ENCODE measurements at regions of chr12 and their contacts with region 1.

Region 1: GRCh38 chr12:115752913-115753726 is 524.4 kb downstream of the MED13L start:
- DNase-seq: peak; percentile 66
- H3K4me3 Mint-ChIP-seq: no peak overlapping the region
- H3K27ac Mint-ChIP-seq: no peak overlapping the region
- H3K4me1 Mint-ChIP-seq: no peaks in the 10 kb centered on the region
- H3K27me3 Mint-ChIP-seq: peaks cover 52% of the 10 kb centered on the region
- CTCF ChIP-seq: peak; percentile 64

Region 2: GRCh38 chr12:114662512-114663177 is 1090.5 kb before region 1 on chr12:
- CTCF ChIA-PET with region 1: interaction called, 16 read pairs
- POLR2A ChIA-PET with region 1: interaction called, 4 read pairs
- intact Hi-C with region 1: loop called (anchors 1 kb)
- DNase-seq: peak; percentile 86
- H3K4me3 Mint-ChIP-seq: no peak overlapping the region
- H3K27ac Mint-ChIP-seq: no peak overlapping the region
- H3K4me1 Mint-ChIP-seq: peaks cover 6% of the 10 kb centered on the region
- H3K27me3 Mint-ChIP-seq: no peaks in the 10 kb centered on the region
- CTCF ChIP-seq: peak; percentile 92

Region 3: DNA sequence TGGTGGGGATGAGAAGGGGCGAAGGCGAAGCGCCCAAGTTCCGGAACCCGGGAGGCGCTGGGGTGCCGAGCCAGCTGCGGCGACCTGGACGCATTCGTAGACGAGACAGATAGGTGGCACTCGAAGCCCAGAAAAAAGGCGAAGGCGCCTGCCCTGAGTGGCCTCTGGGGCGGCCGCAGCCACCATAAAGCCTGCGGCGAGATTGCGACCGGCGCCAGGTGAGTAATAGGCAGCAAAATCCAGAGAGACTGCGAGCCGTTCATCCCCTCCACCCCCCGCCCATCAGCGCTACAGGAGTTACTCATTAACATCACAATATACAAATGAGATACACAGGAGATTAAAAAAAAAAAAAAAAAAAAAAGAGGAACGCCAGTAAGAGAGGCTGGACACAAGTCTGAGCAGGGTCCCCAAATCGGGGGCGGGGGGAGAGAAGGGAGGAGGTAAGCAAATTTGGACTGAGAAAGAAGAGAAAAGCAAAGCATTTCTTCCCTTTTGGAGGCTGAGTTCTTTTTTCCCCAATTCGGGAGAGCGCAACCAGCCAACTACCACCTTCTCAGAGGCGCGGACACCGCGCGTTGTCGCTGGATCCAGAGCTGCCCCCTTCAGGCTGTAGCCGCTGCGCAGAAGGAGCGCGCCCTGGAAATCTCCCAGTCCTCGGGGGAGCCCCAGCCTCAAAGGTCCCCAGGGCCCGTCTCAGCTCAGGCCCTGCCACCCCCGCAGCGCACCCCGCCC is 1084.8 kb before region 1 on chr12:
- CTCF ChIA-PET with region 1: interaction called, 16 read pairs
- POLR2A ChIA-PET with region 1: interaction called, 3 read pairs
- intact Hi-C with region 1: loop called (anchors 1 kb)
- DNase-seq: peak; percentile 92
- H3K4me3 Mint-ChIP-seq: peak overlapping the region; percentile 72
- H3K27ac Mint-ChIP-seq: no peak overlapping the region
- H3K4me1 Mint-ChIP-seq: peaks cover 7% of the 10 kb centered on the region
- H3K27me3 Mint-ChIP-seq: no peaks in the 10 kb centered on the region
- CTCF ChIP-seq: peak; percentile 64

Region 4: DNA sequence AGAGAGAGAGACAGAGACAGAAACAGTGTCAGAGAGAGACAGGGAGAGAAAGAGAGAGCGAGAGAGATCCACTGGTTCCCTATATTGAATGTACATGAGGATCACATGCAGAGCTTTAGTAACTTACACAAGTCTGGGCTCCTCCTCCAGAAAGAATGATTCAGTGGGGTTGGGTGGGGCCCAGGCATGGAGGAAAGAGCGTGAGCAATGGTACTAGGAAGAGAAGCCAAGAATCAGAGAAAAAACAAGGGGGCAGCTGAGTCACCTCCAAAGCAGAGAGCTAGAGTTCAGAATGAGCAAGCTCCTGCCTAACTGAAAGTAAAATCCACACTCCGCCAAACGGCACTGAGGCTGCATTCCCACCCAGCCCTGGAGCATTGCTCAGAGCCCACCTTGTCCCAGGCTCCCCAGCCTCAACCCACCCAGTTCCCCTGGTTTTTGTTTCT is 399.1 kb before region 1 on chr12:
- CTCF ChIA-PET with region 1: no interaction called
- POLR2A ChIA-PET with region 1: no interaction called
- intact Hi-C with region 1: loop called (anchors 2 kb)
- DNase-seq: peak; percentile 98
- H3K4me3 Mint-ChIP-seq: peak overlapping the region; percentile 84
- H3K27ac Mint-ChIP-seq: peak overlapping the region; percentile 99
- H3K4me1 Mint-ChIP-seq: peaks cover 42% of the 10 kb centered on the region
- H3K27me3 Mint-ChIP-seq: no peaks in the 10 kb centered on the region
- CTCF ChIP-seq: no peak

Region 5: GRCh38 chr12:115626210-115626609 is 126.9 kb before region 1 on chr12:
- CTCF ChIA-PET with region 1: interaction called, 6 read pairs
- POLR2A ChIA-PET with region 1: no interaction called
- intact Hi-C with region 1: loop called (anchors 1 kb)
- DNase-seq: no peak
- H3K4me3 Mint-ChIP-seq: no peak overlapping the region
- H3K27ac Mint-ChIP-seq: no peak overlapping the region
- H3K4me1 Mint-ChIP-seq: no peaks in the 10 kb centered on the region
- H3K27me3 Mint-ChIP-seq: peaks cover 12% of the 10 kb centered on the region
- CTCF ChIP-seq: no peak

Region 6: GRCh38 chr12:115632308-115632707 is 120.8 kb before region 1 on chr12:
- CTCF ChIA-PET with region 1: interaction called, 3 read pairs
- POLR2A ChIA-PET with region 1: no interaction called
- intact Hi-C with region 1: loop called (anchors 2 kb)
- DNase-seq: peak; percentile 38
- H3K4me3 Mint-ChIP-seq: no peak overlapping the region
- H3K27ac Mint-ChIP-seq: no peak overlapping the region
- H3K4me1 Mint-ChIP-seq: peaks cover 10% of the 10 kb centered on the region
- H3K27me3 Mint-ChIP-seq: no peaks in the 10 kb centered on the region
- CTCF ChIP-seq: peak; percentile 46

Region 7: GRCh38 chr12:115740586-115741155 is 12.4 kb before region 1 on chr12:
- CTCF ChIA-PET with region 1: interaction called, 14 read pairs
- POLR2A ChIA-PET with region 1: no interaction called
- intact Hi-C with region 1: no loop called
- DNase-seq: no peak
- H3K4me3 Mint-ChIP-seq: no peak overlapping the region
- H3K27ac Mint-ChIP-seq: no peak overlapping the region
- H3K4me1 Mint-ChIP-seq: no peaks in the 10 kb centered on the region
- H3K27me3 Mint-ChIP-seq: peaks cover 30% of the 10 kb centered on the region
- CTCF ChIP-seq: no peak

Region 8: GRCh38 chr12:115879354-115879753 is 126.2 kb after region 1 on chr12:
- CTCF ChIA-PET with region 1: no interaction called
- POLR2A ChIA-PET with region 1: no interaction called
- intact Hi-C with region 1: no loop called
- DNase-seq: no peak
- H3K4me3 Mint-ChIP-seq: no peak overlapping the region
- H3K27ac Mint-ChIP-seq: no peak overlapping the region
- H3K4me1 Mint-ChIP-seq: no peaks in the 10 kb centered on the region
- H3K27me3 Mint-ChIP-seq: peaks cover 20% of the 10 kb centered on the region
- CTCF ChIP-seq: no peak